ENCODE measurements at regions of chr11 and their contacts with region 1.

Region 1: GRCh38 chr11:129695575-129696308 is 119.9 kb upstream of the TMEM45B start:
- DNase-seq: peak; percentile 44
- ATAC-seq: peak; percentile 91
- H3K4me3 Mint-ChIP-seq: peak overlapping the region; percentile 76
- H3K27ac Mint-ChIP-seq: no peak overlapping the region
- H3K4me1 Mint-ChIP-seq: peaks cover 8% of the 10 kb centered on the region
- H3K27me3 Mint-ChIP-seq: peaks cover 29% of the 10 kb centered on the region
- CTCF ChIP-seq: no peak

Region 2: DNA sequence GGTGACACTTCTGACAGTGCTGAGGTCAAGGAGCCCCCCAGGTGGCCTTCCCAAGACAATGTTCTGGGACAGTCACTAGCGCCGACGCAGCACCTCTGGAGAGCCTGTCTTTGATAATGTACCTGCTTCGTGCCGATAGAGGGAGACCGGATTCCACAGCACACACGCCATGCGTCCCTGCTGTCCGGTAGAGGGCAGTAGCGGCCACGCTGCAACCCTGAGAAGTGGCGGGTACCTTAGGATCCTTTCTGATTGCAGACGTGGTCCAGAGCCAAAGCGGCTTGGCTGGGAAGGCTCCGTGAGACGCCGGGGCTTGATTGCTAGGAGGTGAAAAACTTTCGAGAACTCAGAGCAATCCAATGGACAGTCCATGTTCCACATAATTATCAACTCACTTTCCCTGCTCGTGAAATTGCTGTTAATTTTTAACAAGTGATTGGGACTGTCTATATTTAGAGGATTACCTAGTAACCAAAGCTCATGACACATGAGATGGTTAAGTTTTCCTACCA is 331.5 kb before region 1 on chr11:
- CTCF ChIA-PET with region 1: no interaction called
- POLR2A ChIA-PET with region 1: no interaction called
- intact Hi-C with region 1: loop called (anchors 2 kb)
- DNase-seq: peak; percentile 40
- ATAC-seq: peak; percentile 76
- H3K4me3 Mint-ChIP-seq: no peak overlapping the region
- H3K27ac Mint-ChIP-seq: no peak overlapping the region
- H3K4me1 Mint-ChIP-seq: no peaks in the 10 kb centered on the region
- H3K27me3 Mint-ChIP-seq: peaks cover 25% of the 10 kb centered on the region
- CTCF ChIP-seq: peak; percentile 56

Region 3: DNA sequence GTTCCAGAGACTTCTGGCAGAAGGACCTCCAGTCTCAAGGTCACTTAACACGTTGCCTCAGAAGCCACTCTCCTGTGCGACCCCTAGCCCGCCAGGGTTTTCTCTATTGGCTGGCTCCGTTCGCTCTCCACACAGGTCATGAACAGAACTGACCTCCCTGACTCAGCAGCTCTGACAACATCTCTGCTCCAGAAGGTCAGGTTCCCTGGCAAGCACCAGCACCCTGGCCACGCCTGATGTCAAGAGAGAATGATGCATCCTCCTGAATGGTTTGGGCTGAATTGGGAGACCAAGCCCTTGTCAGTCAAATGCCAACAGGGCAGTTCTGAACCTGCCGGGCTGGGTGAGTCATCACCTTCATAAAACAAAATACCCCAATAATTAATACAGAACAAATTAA is 35.6 kb after region 1 on chr11:
- CTCF ChIA-PET with region 1: no interaction called
- POLR2A ChIA-PET with region 1: no interaction called
- intact Hi-C with region 1: no loop called
- DNase-seq: no peak
- ATAC-seq: no peak
- H3K4me3 Mint-ChIP-seq: no peak overlapping the region
- H3K27ac Mint-ChIP-seq: no peak overlapping the region
- H3K4me1 Mint-ChIP-seq: no peaks in the 10 kb centered on the region
- H3K27me3 Mint-ChIP-seq: peaks cover 7% of the 10 kb centered on the region
- CTCF ChIP-seq: no peak